Gastrocnemius medialis (tissue), 4 donors: ENCODE measurements at regions of chr21 and their contacts with region 1.

Region 1: GRCh38 chr21:33641336-33642026 is at the start of gene CRYZL1:
- DNase-seq: peak; percentile 100
- ATAC-seq: peak; percentile 91 to 92
- H3K4me3 ChIP-seq: peak within 1 kb of the TSS; percentile 64 to 84 (median 71)
- H3K27ac ChIP-seq: peak within 1 kb of the TSS; percentile 80 to 92 (median 87)
- H3K4me1 ChIP-seq: peaks cover 23 to 31% of the 10 kb centered on the region in 2 donors
- H3K27me3 ChIP-seq: no peaks in the 10 kb centered on the region
- CTCF ChIP-seq: no peak
- POLR2A ChIP-seq: peak; percentile 36 to 50
- total RNA-seq, gene CRYZL1: 14.8 to 29.4 (median 24.4) TPM

Region 2: GRCh38 chr21:32770871-32771523 is 870.5 kb before region 1 on chr21:
- in situ Hi-C with region 1: no loop called
- intact Hi-C with region 1: loop called (anchors 5 kb)
- DNase-seq: peak; percentile 27 to 42
- ATAC-seq: peak; percentile 53 to 60
- H3K4me3 ChIP-seq: peak overlapping the region; percentile 83 to 94 (median 86)
- H3K27ac ChIP-seq: peak overlapping the region; percentile 87 to 95 (median 88)
- H3K4me1 ChIP-seq: peaks cover 34 to 40% of the 10 kb centered on the region in 2 donors
- H3K27me3 ChIP-seq: peaks cover 0 to 4% (median 0%) of the 10 kb centered on the region in 3 donors
- CTCF ChIP-seq: no peak
- POLR2A ChIP-seq: no peak

Region 3: DNA sequence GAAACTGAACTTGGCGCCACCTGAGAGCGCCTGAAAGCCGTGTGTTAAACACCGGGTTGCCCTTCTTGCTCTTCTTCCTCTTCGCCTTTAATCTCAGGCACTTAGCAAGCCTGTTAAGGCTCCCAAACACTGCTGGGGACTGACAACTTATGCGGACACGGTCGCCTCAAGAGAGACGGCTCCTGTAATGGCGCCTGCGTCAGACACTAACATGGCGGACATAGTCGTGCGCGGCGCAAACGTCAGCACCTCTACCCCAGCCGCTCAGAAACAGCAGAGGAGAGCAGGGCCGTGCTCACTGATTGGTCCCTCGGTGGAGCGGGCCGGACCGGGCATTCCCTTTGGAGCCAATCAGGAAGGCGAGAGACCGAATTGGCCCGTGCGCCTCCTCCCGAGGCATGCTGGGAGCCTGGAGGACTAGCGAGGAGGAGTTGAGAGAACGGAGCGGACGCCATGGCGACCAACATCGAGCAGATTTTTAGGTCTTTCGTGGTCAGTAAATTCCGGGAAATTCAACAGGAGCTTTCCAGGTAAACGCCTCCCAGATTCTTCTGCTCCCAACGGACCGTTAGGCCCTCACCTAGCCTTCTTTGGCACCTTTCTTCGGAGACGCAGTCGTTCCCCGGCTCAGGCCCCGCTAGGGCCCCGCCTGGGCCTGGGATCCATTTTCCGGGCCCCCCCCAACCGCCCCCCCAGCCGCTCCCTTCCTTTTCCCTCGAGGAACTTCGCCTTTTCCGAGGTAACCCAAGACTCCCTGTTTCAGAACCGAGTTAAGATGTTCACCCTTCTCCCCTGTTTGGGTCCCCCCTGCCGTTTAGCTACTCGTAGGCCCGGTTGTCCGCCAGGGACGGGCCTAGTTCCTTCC is 98.6 kb before region 1 on chr21 and contains the start of gene SON:
- in situ Hi-C with region 1: no loop called
- intact Hi-C with region 1: loop called (anchors 1 kb)
- DNase-seq: peak; percentile 100
- ATAC-seq: peak; percentile 88 to 92
- H3K4me3 ChIP-seq: peak within 1 kb of the TSS; percentile 71 to 85 (median 79)
- H3K27ac ChIP-seq: peak within 1 kb of the TSS; percentile 95 to 99 (median 99)
- H3K4me1 ChIP-seq: peaks cover 31 to 38% of the 10 kb centered on the region in 2 donors
- H3K27me3 ChIP-seq: no peaks in the 10 kb centered on the region
- CTCF ChIP-seq: peak in 2 of 5 experiments; percentile 4 to 13
- POLR2A ChIP-seq: peak; percentile 90 to 92
- total RNA-seq, gene SON: 109 to 390 (median 126) TPM

Region 4: GRCh38 chr21:33598051-33598450 is 43.4 kb before region 1 on chr21:
- in situ Hi-C with region 1: no loop called
- intact Hi-C with region 1: no loop called
- DNase-seq: no peak
- ATAC-seq: no peak
- H3K4me3 ChIP-seq: no peak overlapping the region
- H3K27ac ChIP-seq: no peak overlapping the region
- H3K4me1 ChIP-seq: no peaks in the 10 kb centered on the region
- H3K27me3 ChIP-seq: no peaks in the 10 kb centered on the region
- CTCF ChIP-seq: no peak
- POLR2A ChIP-seq: no peak

Region 5: GRCh38 chr21:33751120-33751519 is 109.6 kb after region 1 on chr21:
- in situ Hi-C with region 1: no loop called
- intact Hi-C with region 1: loop called (anchors 10 kb)
- DNase-seq: no peak
- ATAC-seq: peak in 1 of 2 donors; percentile 52
- H3K4me3 ChIP-seq: no peak overlapping the region
- H3K27ac ChIP-seq: peak overlapping the region in 1 of 4 donors; percentile 15
- H3K4me1 ChIP-seq: peaks cover 6 to 22% of the 10 kb centered on the region in 2 donors
- H3K27me3 ChIP-seq: no peaks in the 10 kb centered on the region
- CTCF ChIP-seq: no peak
- POLR2A ChIP-seq: no peak

Region 6: GRCh38 chr21:33901412-33902288 is 260.2 kb after region 1 on chr21:
- in situ Hi-C with region 1: loop called in 1 of 4 experiments (anchors 10 kb)
- intact Hi-C with region 1: loop called (anchors 2 kb)
- DNase-seq: peak; percentile 22 to 77
- ATAC-seq: peak; percentile 70 to 89
- H3K4me3 ChIP-seq: no peak overlapping the region
- H3K27ac ChIP-seq: peak overlapping the region; percentile 32 to 79 (median 69)
- H3K4me1 ChIP-seq: peaks cover 0 to 6% of the 10 kb centered on the region in 2 donors
- H3K27me3 ChIP-seq: no peaks in the 10 kb centered on the region
- CTCF ChIP-seq: peak in 4 of 5 experiments; percentile 29 to 51 (median 40)
- POLR2A ChIP-seq: no peak

Region 7: GRCh38 chr21:34614633-34615486 is 973.4 kb after region 1 on chr21 and contains the start of gene RCAN1:
- in situ Hi-C with region 1: no loop called
- intact Hi-C with region 1: loop called (anchors 10 kb)
- DNase-seq: peak; percentile 89 to 94
- ATAC-seq: peak; percentile 98
- H3K4me3 ChIP-seq: peak within 1 kb of the TSS; percentile 56 to 73 (median 63)
- H3K27ac ChIP-seq: peak within 1 kb of the TSS; percentile 80 to 91 (median 88)
- H3K4me1 ChIP-seq: peaks cover 19 to 36% of the 10 kb centered on the region in 2 donors
- H3K27me3 ChIP-seq: no peaks in the 10 kb centered on the region
- CTCF ChIP-seq: peak in 1 of 5 experiments; percentile 13
- POLR2A ChIP-seq: peak; percentile 75 to 80
- total RNA-seq, gene RCAN1: 21.7 to 37.9 (median 33.2) TPM